Motor neuron (in vitro differentiated cells): ENCODE measurements at regions of chr3 and their contacts with region 1.

Region 1: DNA sequence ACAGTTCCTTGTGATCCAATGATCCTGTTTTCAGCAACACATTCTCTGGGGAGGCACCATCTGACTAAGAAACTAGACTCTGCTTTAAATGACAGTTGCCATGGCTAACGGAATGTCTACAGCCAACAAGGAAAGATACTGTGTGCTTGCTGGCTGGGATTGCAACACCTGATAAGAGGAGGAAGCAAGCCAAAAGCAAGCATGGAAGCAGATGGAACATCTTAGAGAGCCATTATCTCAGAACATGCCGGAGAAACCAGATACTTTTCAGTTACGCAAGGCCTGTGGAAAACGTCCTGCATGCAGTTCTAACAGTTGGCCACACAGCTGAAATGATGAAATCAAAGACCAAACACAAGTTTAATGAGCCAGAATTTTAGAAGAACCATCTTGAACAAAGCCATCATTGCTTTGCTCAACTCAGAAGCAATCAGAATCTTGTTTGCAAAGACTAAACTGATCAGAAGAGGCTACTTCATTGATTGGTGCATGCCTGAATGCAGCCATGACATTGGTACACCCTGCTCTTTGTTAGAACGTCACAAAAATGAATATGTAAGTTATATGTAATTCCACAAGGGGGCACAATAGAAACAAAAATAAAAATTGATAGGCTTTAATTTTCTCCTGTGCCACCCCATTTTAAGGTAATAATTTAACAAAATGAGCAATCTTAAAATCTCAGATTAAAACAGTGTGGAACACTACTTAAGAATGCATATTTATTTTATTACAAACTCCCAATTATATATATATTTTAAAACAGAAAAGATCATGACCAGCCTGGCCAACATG is 50.8 kb downstream of the GXYLT2 start:
- ATAC-seq: peak in 6 of 8 experiments; percentile 36 to 89 (median 83)
- H3K4me3 ChIP-seq: no peak overlapping the region
- H3K27ac ChIP-seq: no peak overlapping the region
- H3K4me1 ChIP-seq: peaks cover 3% of the 10 kb centered on the region in 2 donors

Region 2: GRCh38 chr3:73070675-73071575 is 132.3 kb after region 1 on chr3:
- in situ Hi-C with region 1: loop called in 3 of 9 experiments (anchors 10 to 25 kb)
- ATAC-seq: peak in 3 of 8 experiments; percentile 62 to 81 (median 75)
- H3K4me3 ChIP-seq: no peak overlapping the region
- H3K27ac ChIP-seq: no peak overlapping the region
- H3K4me1 ChIP-seq: no peaks in the 10 kb centered on the region

Region 3: DNA sequence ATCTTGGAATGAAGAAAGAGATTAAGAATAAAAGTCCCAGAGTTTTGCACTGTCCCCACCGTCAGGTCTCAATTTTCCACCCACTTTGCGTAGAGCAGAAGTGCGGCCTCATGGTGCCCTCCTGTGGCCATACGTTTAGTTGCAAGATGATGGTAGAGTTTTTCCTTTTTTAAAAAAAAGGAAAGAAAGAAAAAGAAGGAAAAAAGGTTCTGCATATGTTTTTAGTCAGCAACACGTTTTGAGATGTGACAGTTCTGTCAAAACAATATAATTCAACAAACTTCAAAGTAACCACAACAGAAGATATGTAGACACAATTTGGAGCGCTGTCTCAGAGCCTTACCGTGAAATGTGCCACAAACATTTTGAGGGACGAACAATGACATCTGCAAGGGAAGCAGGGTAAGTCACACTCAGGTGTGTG is 147.4 kb after region 1 on chr3:
- in situ Hi-C with region 1: loop called in 2 of 9 experiments (anchors 25 kb)
- ATAC-seq: peak in 5 of 8 experiments; percentile 41 to 75 (median 60)
- H3K4me3 ChIP-seq: no peak overlapping the region
- H3K27ac ChIP-seq: no peak overlapping the region
- H3K4me1 ChIP-seq: no peaks in the 10 kb centered on the region

Region 4: GRCh38 chr3:73324203-73325155 is 385.8 kb after region 1 on chr3:
- in situ Hi-C with region 1: no loop called
- ATAC-seq: peak in 6 of 8 experiments; percentile 22 to 79 (median 54)
- H3K4me3 ChIP-seq: no peak overlapping the region
- H3K27ac ChIP-seq: peak overlapping the region in 1 of 2 donors; percentile 13
- H3K4me1 ChIP-seq: peaks cover 10 to 49% of the 10 kb centered on the region in 2 donors